ENCODE measurements at regions of chr11 and their contacts with region 1.

Region 1: GRCh38 chr11:114340311-114341131 is 44.3 kb downstream of the NNMT start:
- DNase-seq: peak; percentile 86
- H3K4me3 ChIP-seq: peak overlapping the region in 2 of 3 experiments; percentile 22 to 60
- H3K27ac ChIP-seq: peak overlapping the region; percentile 30
- H3K4me1 ChIP-seq: peaks cover 6% of the 10 kb centered on the region
- H3K27me3 ChIP-seq: no peaks in the 10 kb centered on the region
- CTCF ChIP-seq: peak; percentile 73 to 74
- POLR2A ChIP-seq: no peak

Region 2: GRCh38 chr11:114250993-114251814 is 89.3 kb before region 1 on chr11:
- CTCF ChIA-PET with region 1: no interaction called
- POLR2A ChIA-PET with region 1: no interaction called
- dilution Hi-C with region 1: no loop called
- intact Hi-C with region 1: no loop called
- DNase-seq: no peak
- H3K4me3 ChIP-seq: no peak overlapping the region
- H3K27ac ChIP-seq: no peak overlapping the region
- H3K4me1 ChIP-seq: no peaks in the 10 kb centered on the region
- H3K27me3 ChIP-seq: no peaks in the 10 kb centered on the region
- CTCF ChIP-seq: no peak
- POLR2A ChIP-seq: no peak

Region 3: GRCh38 chr11:114289779-114290178 is 50.7 kb before region 1 on chr11:
- CTCF ChIA-PET with region 1: interaction called, 14 read pairs
- POLR2A ChIA-PET with region 1: no interaction called
- dilution Hi-C with region 1: no loop called
- intact Hi-C with region 1: no loop called
- DNase-seq: no peak
- H3K4me3 ChIP-seq: no peak overlapping the region
- H3K27ac ChIP-seq: no peak overlapping the region
- H3K4me1 ChIP-seq: peaks cover 68% of the 10 kb centered on the region
- H3K27me3 ChIP-seq: no peaks in the 10 kb centered on the region
- CTCF ChIP-seq: no peak
- POLR2A ChIP-seq: no peak

Region 4: DNA sequence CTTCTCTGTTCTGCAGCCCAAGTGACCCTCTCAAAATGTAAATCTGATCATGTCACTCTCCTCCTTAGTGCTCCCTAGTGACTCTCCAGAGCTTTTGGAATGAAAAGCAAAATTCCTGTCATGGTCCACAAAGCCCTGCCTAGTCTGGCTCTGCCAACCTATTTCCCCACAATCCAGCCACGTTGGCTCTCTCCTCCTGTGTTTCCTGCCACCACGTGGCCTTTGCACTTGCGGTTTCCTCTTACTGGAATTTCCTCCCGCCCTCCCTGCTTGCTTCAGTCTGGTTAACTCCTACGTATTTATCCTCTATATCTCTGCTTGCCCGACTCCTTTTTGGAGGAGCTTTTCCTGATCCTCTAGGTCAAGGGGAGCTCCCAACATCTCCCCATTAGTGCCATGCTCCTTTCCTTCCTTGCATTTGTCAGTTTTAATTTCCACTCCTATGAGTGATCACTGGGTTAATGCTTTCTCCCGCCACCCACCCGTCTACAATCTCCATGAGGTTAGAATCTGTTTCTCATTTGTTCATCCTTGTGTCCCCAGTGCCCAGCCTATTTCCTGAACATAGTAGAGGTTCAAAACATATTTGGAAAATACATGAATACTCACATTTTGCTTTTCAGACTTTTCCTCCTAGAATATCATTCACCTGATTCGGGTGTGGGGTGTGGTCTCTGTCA is 32.9 kb before region 1 on chr11:
- CTCF ChIA-PET with region 1: interaction called, 19 read pairs
- POLR2A ChIA-PET with region 1: no interaction called
- dilution Hi-C with region 1: no loop called
- intact Hi-C with region 1: loop called (anchors 1 kb)
- DNase-seq: peak; percentile 91
- H3K4me3 ChIP-seq: peak overlapping the region in 2 of 3 experiments; percentile 10 to 39
- H3K27ac ChIP-seq: peak overlapping the region; percentile 79
- H3K4me1 ChIP-seq: peaks cover 29% of the 10 kb centered on the region
- H3K27me3 ChIP-seq: no peaks in the 10 kb centered on the region
- CTCF ChIP-seq: no peak
- POLR2A ChIP-seq: peak; percentile 15

Region 5: DNA sequence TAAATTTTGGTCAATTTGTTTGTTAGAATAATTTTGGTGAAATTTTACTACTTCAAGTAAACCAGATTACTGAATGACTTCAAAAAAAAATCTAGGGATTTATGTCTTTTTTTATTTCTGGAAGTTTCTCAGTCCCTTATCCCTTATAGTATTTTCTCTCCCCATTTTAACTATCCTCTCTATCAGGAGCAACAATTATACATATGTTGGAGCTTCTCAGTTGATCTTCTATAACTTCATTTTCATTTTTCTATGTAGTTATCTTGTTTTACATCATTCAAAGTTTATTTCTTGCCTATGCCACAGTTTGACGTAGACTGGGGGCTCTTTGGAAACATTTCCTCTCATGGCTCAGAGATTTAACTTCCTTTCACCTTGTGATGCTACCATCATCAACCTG is 10.1 kb before region 1 on chr11:
- CTCF ChIA-PET with region 1: interaction called, 14 read pairs
- POLR2A ChIA-PET with region 1: no interaction called
- dilution Hi-C with region 1: no loop called
- intact Hi-C with region 1: no loop called
- DNase-seq: no peak
- H3K4me3 ChIP-seq: no peak overlapping the region
- H3K27ac ChIP-seq: no peak overlapping the region
- H3K4me1 ChIP-seq: no peaks in the 10 kb centered on the region
- H3K27me3 ChIP-seq: no peaks in the 10 kb centered on the region
- CTCF ChIP-seq: no peak
- POLR2A ChIP-seq: no peak

Region 6: DNA sequence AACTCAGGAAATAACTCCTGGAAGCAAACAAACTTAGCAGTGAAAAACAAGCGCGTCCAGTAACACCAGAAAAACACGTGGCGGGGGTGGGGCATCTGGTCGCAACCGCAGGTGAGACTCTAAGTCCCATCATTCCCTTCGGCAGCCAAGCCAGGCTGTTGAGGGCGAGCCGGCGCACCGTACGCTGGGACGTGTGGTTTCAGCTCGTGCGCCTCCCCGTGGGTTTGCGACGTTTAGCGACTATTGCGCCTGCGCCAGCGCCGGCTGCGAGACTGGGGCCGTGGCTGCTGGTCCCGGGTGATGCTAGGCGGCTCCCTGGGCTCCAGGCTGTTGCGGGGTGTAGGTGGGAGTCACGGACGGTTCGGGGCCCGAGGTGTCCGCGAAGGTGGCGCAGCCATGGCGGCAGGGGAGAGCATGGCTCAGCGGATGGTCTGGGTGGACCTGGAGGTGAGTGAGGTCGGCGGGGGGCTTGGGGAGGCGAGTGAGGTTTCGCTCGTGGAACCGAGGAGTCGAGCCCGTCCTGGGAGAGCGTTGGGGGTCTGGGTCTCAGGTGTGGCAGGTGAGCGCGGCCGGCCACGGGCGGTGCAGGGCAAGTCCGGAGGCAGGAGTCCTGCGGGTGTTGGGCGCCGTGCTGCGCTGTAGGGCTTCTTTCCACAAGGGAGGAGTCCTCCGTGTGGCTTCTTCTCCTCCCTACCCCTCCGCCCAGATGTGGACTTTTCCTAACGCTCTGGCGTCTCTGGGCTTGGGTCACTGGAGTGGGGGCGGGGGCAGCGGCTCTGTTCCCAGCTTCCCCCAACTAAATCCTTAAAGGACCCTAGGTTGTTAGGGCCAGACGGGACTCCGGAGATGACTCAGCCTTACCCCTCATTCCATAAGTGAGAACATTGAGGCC is 99.0 kb after region 1 on chr11 and contains the start of gene REXO2:
- CTCF ChIA-PET with region 1: interaction called, 11 read pairs
- POLR2A ChIA-PET with region 1: no interaction called
- dilution Hi-C with region 1: no loop called
- intact Hi-C with region 1: loop called (anchors 2 kb)
- DNase-seq: peak; percentile 96
- H3K4me3 ChIP-seq: peak within 1 kb of the TSS; percentile 49 to 97 (median 83)
- H3K27ac ChIP-seq: peak within 1 kb of the TSS; percentile 36
- H3K4me1 ChIP-seq: peaks cover 23% of the 10 kb centered on the region
- H3K27me3 ChIP-seq: no peaks in the 10 kb centered on the region
- CTCF ChIP-seq: peak in 1 of 2 donors; percentile 43
- POLR2A ChIP-seq: peak; percentile 83
- total RNA-seq, gene REXO2: 155 and 182 TPM in 2 replicates

Region 7: DNA sequence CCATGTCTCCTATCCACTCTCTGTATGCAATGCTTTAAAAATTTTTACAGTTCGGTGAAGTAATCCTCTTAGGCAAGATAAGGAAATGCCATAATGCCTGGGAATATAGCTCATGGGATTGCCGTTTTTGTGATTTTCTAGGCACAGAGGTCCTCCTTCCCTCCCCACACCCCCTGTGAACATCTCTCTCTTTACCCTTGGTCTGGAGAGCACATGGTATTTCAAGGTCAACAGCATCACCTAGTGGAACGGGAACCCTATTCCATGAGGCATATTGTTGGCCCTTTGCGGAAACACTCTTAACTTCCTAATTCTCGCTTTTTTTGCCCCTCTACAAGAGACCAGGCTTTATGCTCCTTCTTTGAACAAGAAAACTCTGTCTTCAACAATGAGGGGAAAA is 246.3 kb after region 1 on chr11:
- CTCF ChIA-PET with region 1: interaction called, 7 read pairs
- POLR2A ChIA-PET with region 1: no interaction called
- dilution Hi-C with region 1: no loop called
- intact Hi-C with region 1: loop called (anchors 1 kb)
- DNase-seq: no peak
- H3K4me3 ChIP-seq: no peak overlapping the region
- H3K27ac ChIP-seq: no peak overlapping the region
- H3K4me1 ChIP-seq: no peaks in the 10 kb centered on the region
- H3K27me3 ChIP-seq: no peaks in the 10 kb centered on the region
- CTCF ChIP-seq: no peak
- POLR2A ChIP-seq: no peak

Region 8: DNA sequence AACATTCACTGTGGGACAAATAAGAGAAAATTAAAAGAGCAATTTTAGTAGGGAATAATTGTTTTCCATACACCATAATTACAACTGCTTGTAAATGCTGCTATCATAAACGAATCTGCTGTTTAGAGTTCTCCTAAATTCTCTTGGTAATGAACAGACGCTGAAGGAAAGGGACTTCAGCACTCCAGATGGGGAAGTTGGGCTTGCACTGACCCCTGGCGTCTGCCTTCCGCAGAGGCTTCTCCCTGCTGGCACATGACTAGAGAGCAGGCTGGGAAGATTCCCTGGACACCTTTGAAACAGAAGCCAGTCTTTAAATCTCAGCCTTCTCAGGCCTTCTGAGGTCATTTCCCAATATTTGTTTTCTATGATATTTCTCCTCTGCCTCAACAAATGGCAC is 421.9 kb after region 1 on chr11:
- CTCF ChIA-PET with region 1: interaction called, 5 read pairs
- POLR2A ChIA-PET with region 1: no interaction called
- dilution Hi-C with region 1: no loop called
- intact Hi-C with region 1: loop called (anchors 1 kb)
- DNase-seq: peak; percentile 47
- H3K4me3 ChIP-seq: no peak overlapping the region
- H3K27ac ChIP-seq: no peak overlapping the region
- H3K4me1 ChIP-seq: no peaks in the 10 kb centered on the region
- H3K27me3 ChIP-seq: no peaks in the 10 kb centered on the region
- CTCF ChIP-seq: peak; percentile 51 to 75
- POLR2A ChIP-seq: no peak